Caco-2 (cell line): ENCODE measurements at regions of chr2 and their contacts with region 1.

Region 1: GRCh38 chr2:213151437-213152064 is at the start of gene IKZF2:
- DNase-seq: peak; percentile 86 to 88
- H3K4me3 ChIP-seq: peak within 1 kb of the TSS; percentile 70
- H3K4me3 Mint-ChIP-seq: peak within 1 kb of the TSS; percentile 97
- H3K27ac Mint-ChIP-seq: peak within 1 kb of the TSS; percentile 61
- H3K4me1 ChIP-seq: 0 out of 2 replicates have a peak, but pooled peaks cover 3% of the 10 kb centered on the region
- H3K4me1 Mint-ChIP-seq: peaks cover 19% of the 10 kb centered on the region
- H3K27me3 ChIP-seq: no peaks in the 10 kb centered on the region
- H3K27me3 Mint-ChIP-seq: no peaks in the 10 kb centered on the region
- CTCF ChIP-seq: no peak
- total RNA-seq, gene IKZF2: 13.3 and 14.2 TPM in 2 replicates

Region 2: DNA sequence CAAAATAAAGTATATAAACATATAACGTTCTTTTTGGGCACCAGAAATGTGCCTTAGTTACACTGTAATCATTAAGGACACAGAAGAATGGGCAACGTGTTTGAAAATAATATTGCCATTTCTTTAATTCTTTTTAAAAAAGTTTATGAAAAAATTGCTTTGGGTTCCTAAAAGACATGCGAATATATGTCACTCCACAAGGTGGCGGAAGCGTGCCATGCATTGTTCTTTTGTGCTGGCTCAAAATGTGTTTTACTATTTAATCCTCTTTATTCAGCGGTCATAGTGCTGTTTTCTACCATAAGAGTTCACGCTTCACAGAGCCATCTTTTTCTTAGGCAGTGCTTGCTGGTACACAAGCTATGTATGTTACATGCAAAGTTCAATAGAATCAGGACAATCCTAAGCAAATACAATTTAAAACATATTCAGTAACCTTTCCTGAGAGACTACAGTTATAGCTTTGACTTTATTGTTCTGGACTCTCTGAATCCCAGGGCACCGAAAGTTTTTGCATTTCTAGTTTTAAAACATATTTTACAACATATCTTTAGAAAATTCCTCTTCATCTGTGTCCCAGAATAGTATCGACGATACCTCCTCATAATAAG is 465.2 kb before region 1 on chr2:
- CTCF ChIA-PET with region 1: interaction called, 3 read pairs
- POLR2A ChIA-PET with region 1: no interaction called
- intact Hi-C with region 1: loop called (anchors 1 kb)
- DNase-seq: peak; percentile 54 to 57
- H3K4me3 ChIP-seq: no peak overlapping the region
- H3K4me3 Mint-ChIP-seq: no peak overlapping the region
- H3K27ac Mint-ChIP-seq: no peak overlapping the region
- H3K4me1 ChIP-seq: no peaks in the 10 kb centered on the region; the same call in 1 of the 2 replicates
- H3K4me1 Mint-ChIP-seq: no peaks in the 10 kb centered on the region
- H3K27me3 ChIP-seq: no peaks in the 10 kb centered on the region
- H3K27me3 Mint-ChIP-seq: peaks cover 3% of the 10 kb centered on the region
- CTCF ChIP-seq: peak; percentile 86 to 89

Region 3: DNA sequence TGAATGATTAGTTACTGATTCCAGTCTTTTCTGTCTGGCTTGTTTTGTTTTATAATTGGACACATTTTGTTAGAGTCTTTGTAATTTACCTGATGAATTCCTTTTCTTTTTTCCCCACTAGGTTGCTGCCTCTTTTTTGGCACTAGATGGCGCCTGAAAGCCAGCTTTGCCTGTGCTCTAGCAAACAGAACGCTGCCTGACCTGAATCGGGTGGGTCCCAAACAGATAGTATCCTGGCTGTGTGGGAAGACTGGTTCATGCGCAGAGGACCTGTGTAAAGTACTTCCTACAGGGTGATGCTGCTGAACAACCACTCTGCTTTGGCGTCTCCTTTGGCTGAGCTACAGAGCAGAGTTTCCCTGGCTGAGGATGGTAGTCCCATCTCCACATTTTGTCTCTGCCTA is 288.4 kb before region 1 on chr2:
- CTCF ChIA-PET with region 1: no interaction called
- POLR2A ChIA-PET with region 1: no interaction called
- intact Hi-C with region 1: loop called (anchors 1 kb)
- DNase-seq: peak; percentile 64 to 70
- H3K4me3 ChIP-seq: no peak overlapping the region
- H3K4me3 Mint-ChIP-seq: no peak overlapping the region
- H3K27ac Mint-ChIP-seq: no peak overlapping the region
- H3K4me1 ChIP-seq: no peaks in the 10 kb centered on the region
- H3K4me1 Mint-ChIP-seq: no peaks in the 10 kb centered on the region
- H3K27me3 ChIP-seq: no peaks in the 10 kb centered on the region
- H3K27me3 Mint-ChIP-seq: no peaks in the 10 kb centered on the region
- CTCF ChIP-seq: peak; percentile 57 to 59

Region 4: DNA sequence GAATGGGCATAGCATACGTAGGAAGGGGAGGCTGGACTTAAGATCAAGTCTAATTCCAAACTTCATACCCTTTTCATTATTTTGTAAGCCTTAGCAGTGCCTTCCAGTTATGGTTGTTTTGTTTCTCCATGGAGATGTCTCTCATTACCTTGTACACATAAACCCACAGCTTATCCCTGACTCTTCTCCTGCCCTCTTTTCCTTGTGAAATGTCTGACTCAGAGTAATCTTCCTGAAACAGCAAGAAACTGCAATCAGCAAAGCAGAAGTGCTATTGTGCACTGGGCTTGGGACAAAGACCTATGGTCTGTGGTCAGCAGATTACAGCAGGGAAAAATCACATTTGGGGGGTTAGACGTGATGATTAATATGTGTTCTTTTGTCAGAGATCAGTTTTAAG is 176.9 kb before region 1 on chr2:
- CTCF ChIA-PET with region 1: interaction called, 5 read pairs
- POLR2A ChIA-PET with region 1: no interaction called
- intact Hi-C with region 1: loop called (anchors 5 kb)
- DNase-seq: no peak
- H3K4me3 ChIP-seq: no peak overlapping the region
- H3K4me3 Mint-ChIP-seq: no peak overlapping the region
- H3K27ac Mint-ChIP-seq: no peak overlapping the region
- H3K4me1 ChIP-seq: peaks cover 12% of the 10 kb centered on the region
- H3K4me1 Mint-ChIP-seq: peaks cover 16% of the 10 kb centered on the region
- H3K27me3 ChIP-seq: no peaks in the 10 kb centered on the region
- H3K27me3 Mint-ChIP-seq: no peaks in the 10 kb centered on the region
- CTCF ChIP-seq: no peak

Region 5: DNA sequence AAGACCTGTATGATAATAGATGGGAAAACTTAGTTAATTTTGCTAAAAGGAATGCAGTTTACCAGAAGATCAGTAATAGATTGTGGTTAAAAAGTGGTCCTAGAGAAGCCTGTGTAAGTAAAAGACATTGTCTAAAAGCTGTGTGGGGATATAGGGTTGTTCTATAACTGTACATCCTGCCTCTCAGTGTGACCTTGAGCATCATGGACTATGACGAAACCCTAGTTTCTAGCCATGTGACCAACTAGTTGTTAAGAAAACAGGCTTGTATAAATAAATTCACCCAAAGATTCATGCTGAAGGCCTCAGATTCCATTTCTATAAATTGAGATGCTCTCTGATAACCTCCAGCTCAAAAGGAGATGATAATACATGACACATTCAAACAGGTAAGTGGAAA is 160.9 kb before region 1 on chr2:
- CTCF ChIA-PET with region 1: no interaction called
- POLR2A ChIA-PET with region 1: no interaction called
- intact Hi-C with region 1: no loop called
- DNase-seq: no peak
- H3K4me3 ChIP-seq: no peak overlapping the region
- H3K4me3 Mint-ChIP-seq: no peak overlapping the region
- H3K27ac Mint-ChIP-seq: no peak overlapping the region
- H3K4me1 ChIP-seq: no peaks in the 10 kb centered on the region
- H3K4me1 Mint-ChIP-seq: no peaks in the 10 kb centered on the region
- H3K27me3 ChIP-seq: no peaks in the 10 kb centered on the region
- H3K27me3 Mint-ChIP-seq: no peaks in the 10 kb centered on the region
- CTCF ChIP-seq: no peak

Region 6: GRCh38 chr2:213161759-213162515 is 10.4 kb after region 1 on chr2:
- CTCF ChIA-PET with region 1: no interaction called
- POLR2A ChIA-PET with region 1: no interaction called
- intact Hi-C with region 1: no loop called
- DNase-seq: no peak
- H3K4me3 ChIP-seq: no peak overlapping the region
- H3K4me3 Mint-ChIP-seq: no peak overlapping the region
- H3K27ac Mint-ChIP-seq: no peak overlapping the region
- H3K4me1 ChIP-seq: peaks cover 22% of the 10 kb centered on the region
- H3K4me1 Mint-ChIP-seq: peaks cover 6% of the 10 kb centered on the region
- H3K27me3 ChIP-seq: no peaks in the 10 kb centered on the region
- H3K27me3 Mint-ChIP-seq: no peaks in the 10 kb centered on the region
- CTCF ChIP-seq: no peak

Region 7: GRCh38 chr2:213175526-213176162 is 24.1 kb after region 1 on chr2:
- CTCF ChIA-PET with region 1: no interaction called
- POLR2A ChIA-PET with region 1: no interaction called
- intact Hi-C with region 1: loop called (anchors 1 kb)
- DNase-seq: peak; percentile 47 to 65
- H3K4me3 ChIP-seq: no peak overlapping the region
- H3K4me3 Mint-ChIP-seq: no peak overlapping the region
- H3K27ac Mint-ChIP-seq: no peak overlapping the region
- H3K4me1 ChIP-seq: peaks cover 37% of the 10 kb centered on the region
- H3K4me1 Mint-ChIP-seq: peaks cover 41% of the 10 kb centered on the region
- H3K27me3 ChIP-seq: no peaks in the 10 kb centered on the region
- H3K27me3 Mint-ChIP-seq: no peaks in the 10 kb centered on the region
- CTCF ChIP-seq: no peak